ENCODE measurements at regions of chr22 and their contacts with region 1.

Region 1: DNA sequence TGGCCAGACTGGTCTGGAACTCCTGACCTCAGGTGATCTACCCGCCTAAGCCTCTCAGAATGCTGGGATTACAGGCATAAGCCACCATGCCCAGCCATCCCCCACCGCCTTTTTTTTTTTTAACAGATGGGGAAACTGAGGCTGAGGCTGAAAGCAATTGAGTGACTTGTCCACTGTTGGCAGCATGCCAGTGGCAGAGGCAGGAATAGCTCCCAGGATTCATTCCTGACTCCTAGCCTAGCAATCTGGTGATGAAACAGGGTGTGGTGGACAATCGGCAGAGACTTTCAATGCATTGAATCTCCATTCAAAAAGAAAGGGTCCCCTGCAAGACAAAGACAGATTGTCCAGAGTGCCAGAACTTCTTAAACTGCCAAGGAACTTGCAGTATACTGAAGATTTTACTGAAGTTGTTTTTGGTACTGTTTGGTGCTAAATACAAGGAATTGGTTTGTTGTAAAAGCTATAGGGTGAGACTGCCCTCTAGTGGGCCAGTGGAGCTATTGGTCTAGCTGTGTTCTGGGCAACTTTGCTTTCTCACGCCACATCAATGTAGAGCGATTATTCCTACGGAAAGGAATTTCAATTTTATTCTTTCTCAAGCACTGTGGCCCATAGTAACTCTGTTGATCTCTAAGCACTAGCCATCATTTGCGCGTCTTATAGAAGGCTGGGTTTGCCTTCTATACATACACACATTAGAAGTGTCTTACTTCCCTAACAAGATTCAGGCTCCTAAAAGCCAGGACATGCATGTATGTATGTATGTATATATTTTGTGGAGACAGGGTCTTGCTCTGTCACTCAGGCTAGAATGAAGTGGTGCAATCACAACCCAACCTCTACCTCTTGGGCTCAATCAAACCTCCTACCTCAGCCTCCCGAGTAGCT is 21.0 kb downstream of the C22orf31 start:
- DNase-seq: peak; percentile 92
- H3K4me3 ChIP-seq: peak overlapping the region; percentile 35; the same call in 1 of the 2 replicates
- H3K27ac ChIP-seq: peak overlapping the region; percentile 78
- H3K4me1 ChIP-seq: peaks cover 40% of the 10 kb centered on the region
- H3K27me3 ChIP-seq: no peaks in the 10 kb centered on the region

Region 2: DNA sequence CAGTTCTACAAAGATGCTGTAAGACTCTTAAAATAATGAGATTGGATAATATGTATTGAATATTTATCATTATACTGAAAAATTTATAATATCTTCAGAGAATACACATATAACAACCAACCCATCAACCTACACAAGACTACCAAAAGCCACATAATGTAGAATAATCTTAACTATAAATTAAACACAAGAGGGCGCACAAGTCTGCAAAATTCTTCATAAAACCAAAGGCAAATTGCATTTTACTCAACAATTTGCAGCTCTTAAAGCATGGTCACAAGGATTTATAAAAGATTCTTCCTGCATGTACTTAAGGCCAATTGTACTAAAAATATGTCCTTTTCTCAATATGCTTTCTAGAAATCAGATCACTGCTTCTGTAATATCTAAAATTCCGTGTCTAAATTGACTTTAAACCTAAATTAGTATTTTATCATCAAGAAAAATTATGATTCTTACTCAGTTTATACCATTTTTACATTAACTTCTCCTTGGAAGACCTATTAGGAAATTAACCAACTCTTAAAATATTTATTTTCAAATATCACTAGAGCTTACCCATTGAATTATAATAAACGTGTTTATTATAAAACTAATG is 440.0 kb before region 1 on chr22:
- in situ Hi-C with region 1: loop called (anchors 25 kb)
- DNase-seq: peak; percentile 76
- H3K4me3 ChIP-seq: no peak overlapping the region
- H3K27ac ChIP-seq: no peak overlapping the region
- H3K4me1 ChIP-seq: peaks cover 1% of the 10 kb centered on the region; the same call in 1 of the 2 replicates
- H3K27me3 ChIP-seq: no peaks in the 10 kb centered on the region